Endothelial cell of umbilical vein (primary cell): ENCODE measurements at regions of chr12 and their contacts with region 1.

Region 1: DNA sequence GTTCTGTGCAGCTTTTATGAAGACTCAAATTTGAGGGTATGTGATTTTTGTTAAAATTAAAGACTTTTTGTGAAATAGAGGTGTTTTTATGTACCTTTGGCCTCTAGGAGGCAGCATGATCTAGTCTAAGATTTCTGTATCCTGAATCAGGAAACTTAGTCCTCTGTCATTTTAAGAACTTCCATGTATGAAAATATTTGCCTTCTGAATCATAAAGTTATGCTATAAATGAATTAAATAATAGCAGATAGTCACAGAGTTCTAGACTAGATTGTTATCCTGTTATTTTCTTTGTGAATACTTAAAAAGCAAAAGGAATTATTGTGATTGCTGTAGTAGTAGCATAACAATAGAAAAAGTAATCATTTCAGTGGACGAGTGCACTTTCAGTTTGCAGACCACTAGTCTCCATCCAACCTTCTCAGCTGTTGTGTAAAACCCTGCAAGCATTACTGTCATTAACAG is 56.3 kb downstream of the FGD4 start:
- DNase-seq: peak; percentile 91
- H3K4me3 ChIP-seq: peak overlapping the region in 2 of 3 experiments; percentile 50 to 82
- H3K27ac ChIP-seq: peak overlapping the region; percentile 89
- H3K4me1 ChIP-seq: peaks cover 67% of the 10 kb centered on the region
- H3K27me3 ChIP-seq: no peaks in the 10 kb centered on the region
- CTCF ChIP-seq: peak; percentile 44 to 46
- POLR2A ChIP-seq: peak; percentile 35

Region 2: DNA sequence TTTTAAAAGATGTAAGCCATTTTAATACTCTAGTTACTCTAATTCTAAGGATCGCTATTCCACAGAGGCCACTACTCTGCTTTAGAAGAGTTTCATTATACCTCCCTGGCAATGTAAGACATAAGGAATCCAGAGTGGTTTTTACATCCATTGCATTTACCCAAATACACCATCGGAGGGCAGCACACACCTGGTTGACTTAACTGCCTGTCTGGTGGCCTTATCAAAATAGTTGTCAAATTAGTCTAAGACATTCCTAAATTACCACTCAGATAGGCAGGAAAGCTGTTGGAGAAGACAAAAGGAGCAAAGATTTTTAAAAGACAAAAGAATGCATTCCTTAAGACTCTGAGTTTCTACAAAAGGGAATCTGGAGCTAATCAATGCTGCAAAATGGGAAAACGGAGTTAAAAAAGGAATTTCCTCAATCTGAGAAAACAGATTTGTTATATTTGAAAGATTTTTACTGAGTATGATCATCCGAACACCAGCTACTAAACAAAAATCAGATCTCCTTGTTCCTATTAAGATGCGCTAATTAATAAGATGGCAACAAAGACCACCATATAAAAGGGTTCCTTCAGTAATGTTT is 90.1 kb before region 1 on chr12:
- CTCF ChIA-PET with region 1: interaction called, 16 read pairs
- POLR2A ChIA-PET with region 1: no interaction called
- dilution Hi-C with region 1: no loop called
- intact Hi-C with region 1: loop called (anchors 1 kb)
- DNase-seq: peak; percentile 85
- H3K4me3 ChIP-seq: no peak overlapping the region
- H3K27ac ChIP-seq: no peak overlapping the region
- H3K4me1 ChIP-seq: peaks cover 2% of the 10 kb centered on the region
- H3K27me3 ChIP-seq: no peaks in the 10 kb centered on the region
- CTCF ChIP-seq: peak; percentile 66 to 70
- POLR2A ChIP-seq: no peak

Region 3: GRCh38 chr12:32437095-32437515 is 18.5 kb before region 1 on chr12:
- CTCF ChIA-PET with region 1: interaction called, 10 read pairs
- POLR2A ChIA-PET with region 1: no interaction called
- dilution Hi-C with region 1: no loop called
- intact Hi-C with region 1: loop called (anchors 1 kb)
- DNase-seq: peak; percentile 81
- H3K4me3 ChIP-seq: no peak overlapping the region
- H3K27ac ChIP-seq: peak overlapping the region; percentile 99
- H3K4me1 ChIP-seq: peaks cover 36% of the 10 kb centered on the region
- H3K27me3 ChIP-seq: no peaks in the 10 kb centered on the region
- CTCF ChIP-seq: no peak
- POLR2A ChIP-seq: no peak

Region 4: DNA sequence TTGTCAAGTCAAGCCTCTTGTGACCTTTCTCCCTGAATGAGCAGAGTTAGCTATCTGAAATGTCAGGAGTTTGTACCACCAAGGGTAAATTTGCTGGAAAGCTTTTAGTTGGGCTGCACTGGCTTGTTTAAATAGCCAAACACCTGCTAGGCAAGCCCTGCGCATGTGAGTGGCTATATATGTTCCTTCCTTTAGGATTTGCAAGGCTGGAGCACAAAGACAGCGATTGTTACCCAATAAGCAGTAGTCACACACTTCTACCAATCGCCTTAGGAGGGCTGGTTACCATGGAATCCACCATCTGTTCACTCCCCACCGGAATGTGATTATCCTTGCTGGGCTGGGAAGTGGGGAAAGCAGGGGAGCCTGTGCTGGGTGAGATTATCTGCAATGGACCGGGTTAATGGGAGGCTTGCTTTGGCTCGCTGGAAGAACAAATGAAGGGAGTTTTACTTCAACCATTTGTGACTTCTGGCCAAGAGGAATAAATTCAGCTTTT is 46.2 kb after region 1 on chr12:
- CTCF ChIA-PET with region 1: no interaction called
- POLR2A ChIA-PET with region 1: no interaction called
- dilution Hi-C with region 1: no loop called
- intact Hi-C with region 1: loop called (anchors 1 kb)
- DNase-seq: peak; percentile 59
- H3K4me3 ChIP-seq: peak overlapping the region in 1 of 3 experiments; percentile 33
- H3K27ac ChIP-seq: no peak overlapping the region
- H3K4me1 ChIP-seq: peaks cover 43% of the 10 kb centered on the region
- H3K27me3 ChIP-seq: no peaks in the 10 kb centered on the region
- CTCF ChIP-seq: no peak
- POLR2A ChIP-seq: no peak

Region 5: GRCh38 chr12:32586390-32586789 is 130.8 kb after region 1 on chr12:
- CTCF ChIA-PET with region 1: interaction called, 4 read pairs
- POLR2A ChIA-PET with region 1: no interaction called
- dilution Hi-C with region 1: no loop called
- intact Hi-C with region 1: loop called (anchors 1 kb)
- DNase-seq: peak; percentile 96
- H3K4me3 ChIP-seq: no peak overlapping the region
- H3K27ac ChIP-seq: peak overlapping the region; percentile 72
- H3K4me1 ChIP-seq: peaks cover 32% of the 10 kb centered on the region
- H3K27me3 ChIP-seq: no peaks in the 10 kb centered on the region
- CTCF ChIP-seq: no peak
- POLR2A ChIP-seq: peak; percentile 16

Region 6: GRCh38 chr12:32671930-32672780 is 216.5 kb after region 1 on chr12:
- CTCF ChIA-PET with region 1: interaction called, 37 read pairs
- POLR2A ChIA-PET with region 1: no interaction called
- dilution Hi-C with region 1: no loop called
- intact Hi-C with region 1: loop called (anchors 1 kb)
- DNase-seq: peak; percentile 85
- H3K4me3 ChIP-seq: no peak overlapping the region
- H3K27ac ChIP-seq: no peak overlapping the region
- H3K4me1 ChIP-seq: peaks cover 6% of the 10 kb centered on the region
- H3K27me3 ChIP-seq: no peaks in the 10 kb centered on the region
- CTCF ChIP-seq: peak; percentile 45 to 65
- POLR2A ChIP-seq: no peak